ENCODE measurements at regions of chrX and their contacts with region 1.

Region 1: DNA sequence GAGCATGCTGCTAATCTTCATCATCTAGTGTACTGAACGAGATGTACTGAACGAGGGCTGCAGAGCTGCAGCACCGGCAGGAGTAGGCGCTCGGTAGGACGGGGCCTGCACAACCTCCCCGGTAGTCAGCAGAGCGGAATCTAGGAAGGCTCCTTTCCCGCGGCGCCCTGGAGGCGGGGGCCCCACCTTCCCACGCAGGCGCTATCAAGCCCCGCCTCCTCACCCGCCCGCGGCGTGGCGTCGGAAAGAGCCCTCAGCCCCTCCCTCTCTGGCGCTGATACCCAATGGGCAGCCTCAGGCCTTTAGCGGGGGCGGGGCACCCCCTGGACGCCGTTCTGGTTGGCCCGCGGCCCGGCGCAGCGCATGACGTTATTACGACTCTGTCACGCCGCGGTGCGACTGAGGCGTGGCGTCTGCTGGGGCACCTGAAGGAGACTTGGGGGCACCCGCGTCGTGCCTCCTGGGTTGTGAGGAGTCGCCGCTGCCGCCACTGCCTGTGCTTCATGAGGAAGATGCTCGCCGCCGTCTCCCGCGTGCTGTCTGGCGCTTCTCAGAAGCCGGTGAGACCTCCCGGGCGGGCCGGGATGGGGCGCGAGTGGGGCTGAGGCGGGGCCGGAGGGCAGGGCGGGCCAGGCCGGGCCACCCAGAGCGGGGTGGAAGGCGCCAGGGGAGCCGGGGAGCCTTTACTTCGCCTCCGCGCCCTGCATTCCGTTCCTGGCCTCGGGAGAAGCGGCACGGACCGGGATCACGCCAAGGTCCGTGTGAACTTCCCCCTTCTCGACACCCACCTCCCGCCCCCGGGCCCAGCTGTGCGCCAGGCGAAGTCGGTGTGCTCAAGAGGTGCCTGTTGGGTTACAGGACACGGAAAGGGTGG is at the start of gene PDHA1:
- DNase-seq: peak; percentile 85 to 93
- ATAC-seq: peak; percentile 88 to 92
- H3K4me3 ChIP-seq: peak within 1 kb of the TSS; percentile 57 to 79 (median 60)
- H3K27ac ChIP-seq: peak within 1 kb of the TSS; percentile 84 to 94 (median 93)
- H3K4me1 ChIP-seq: peaks cover 10 to 14% of the 10 kb centered on the region in 2 donors
- H3K27me3 ChIP-seq: no peaks in the 10 kb centered on the region
- CTCF ChIP-seq: no peak
- POLR2A ChIP-seq: peak; percentile 82 to 91
- total RNA-seq, gene PDHA1: 143 to 238 (median 203) TPM

Region 2: GRCh38 chrX:17736856-17737706 is 1606.7 kb before region 1 on chrX and contains the start of gene SCML1:
- in situ Hi-C with region 1: no loop called
- intact Hi-C with region 1: loop called (anchors 10 kb)
- DNase-seq: peak; percentile 96 to 98
- ATAC-seq: peak; percentile 85 to 86
- H3K4me3 ChIP-seq: peak within 1 kb of the TSS; percentile 65 to 77 (median 76)
- H3K27ac ChIP-seq: peak within 1 kb of the TSS; percentile 88 to 98 (median 96)
- H3K4me1 ChIP-seq: peaks cover 7 to 25% of the 10 kb centered on the region in 2 donors
- H3K27me3 ChIP-seq: no peaks in the 10 kb centered on the region
- CTCF ChIP-seq: no peak
- POLR2A ChIP-seq: peak; percentile 79 to 80
- total RNA-seq, gene SCML1: 5.6 to 29.0 (median 5.8) TPM

Region 3: GRCh38 chrX:18390941-18391538 is 952.7 kb before region 1 on chrX:
- in situ Hi-C with region 1: loop called (anchors 10 to 25 kb)
- intact Hi-C with region 1: no loop called
- DNase-seq: peak; percentile 11 to 34
- ATAC-seq: peak; percentile 36 to 45
- H3K4me3 ChIP-seq: no peak overlapping the region
- H3K27ac ChIP-seq: no peak overlapping the region
- H3K4me1 ChIP-seq: no peaks in the 10 kb centered on the region
- H3K27me3 ChIP-seq: no peaks in the 10 kb centered on the region
- CTCF ChIP-seq: peak; percentile 43 to 83 (median 70)
- POLR2A ChIP-seq: no peak

Region 4: GRCh38 chrX:18674788-18675735 is 668.7 kb before region 1 on chrX:
- in situ Hi-C with region 1: no loop called
- intact Hi-C with region 1: loop called (anchors 10 kb)
- DNase-seq: peak; percentile 35 to 58
- ATAC-seq: peak; percentile 89 to 91
- H3K4me3 ChIP-seq: peak overlapping the region; percentile 66 to 79 (median 70)
- H3K27ac ChIP-seq: peak overlapping the region; percentile 82 to 89 (median 85)
- H3K4me1 ChIP-seq: peaks cover 0 to 4% of the 10 kb centered on the region in 2 donors
- H3K27me3 ChIP-seq: no peaks in the 10 kb centered on the region
- CTCF ChIP-seq: no peak
- POLR2A ChIP-seq: peak; percentile 24 to 38

Region 5: DNA sequence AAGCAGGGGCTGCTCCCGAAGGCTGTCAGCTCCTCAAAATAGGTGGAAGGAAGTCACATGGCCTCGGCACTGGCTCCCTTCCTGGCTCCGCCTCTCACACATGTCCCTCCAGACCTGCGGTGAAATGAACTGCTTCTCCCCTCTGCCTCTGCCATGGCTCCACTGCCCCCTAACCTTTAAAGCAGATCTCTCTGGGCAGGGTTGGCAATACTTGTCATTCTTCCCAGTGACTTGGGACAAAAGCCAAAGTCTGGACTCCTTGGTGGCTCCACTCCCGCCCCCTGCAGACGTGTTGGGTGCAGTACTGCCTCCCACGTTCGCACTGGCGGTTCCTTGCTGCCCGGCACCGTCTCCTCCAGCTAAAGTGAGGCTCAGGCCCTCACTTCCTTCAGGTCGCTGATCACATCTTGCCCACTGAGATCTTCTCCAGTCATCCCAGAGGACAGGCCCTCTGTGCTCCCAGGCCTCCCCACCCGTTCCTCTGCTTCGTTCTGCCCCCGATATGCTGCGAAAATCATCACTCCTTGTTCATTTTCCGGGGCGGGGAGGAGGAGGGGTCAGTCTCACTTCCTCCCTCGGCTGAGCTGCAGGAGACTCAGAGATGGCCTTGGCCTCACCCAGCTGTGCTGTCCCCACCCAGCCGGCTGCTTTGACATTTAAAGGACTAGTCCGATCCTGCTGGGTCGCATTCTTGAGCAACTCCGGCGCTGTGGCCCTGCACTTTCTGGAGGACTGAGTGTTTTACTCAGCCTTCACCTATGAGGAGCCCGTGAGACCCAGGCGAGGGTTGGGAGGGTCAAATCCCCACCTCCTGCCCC is 457.2 kb before region 1 on chrX:
- in situ Hi-C with region 1: loop called in 1 of 4 experiments (anchors 25 kb)
- intact Hi-C with region 1: loop called (anchors 2 kb)
- DNase-seq: peak; percentile 56 to 85
- ATAC-seq: peak; percentile 71 to 78
- H3K4me3 ChIP-seq: peak overlapping the region; percentile 45 to 49 (median 48)
- H3K27ac ChIP-seq: peak overlapping the region; percentile 84 to 90 (median 86)
- H3K4me1 ChIP-seq: peaks cover 12 to 20% of the 10 kb centered on the region in 2 donors
- H3K27me3 ChIP-seq: no peaks in the 10 kb centered on the region
- CTCF ChIP-seq: peak; percentile 51 to 66 (median 65)
- POLR2A ChIP-seq: peak; percentile 33 to 40

Region 6: DNA sequence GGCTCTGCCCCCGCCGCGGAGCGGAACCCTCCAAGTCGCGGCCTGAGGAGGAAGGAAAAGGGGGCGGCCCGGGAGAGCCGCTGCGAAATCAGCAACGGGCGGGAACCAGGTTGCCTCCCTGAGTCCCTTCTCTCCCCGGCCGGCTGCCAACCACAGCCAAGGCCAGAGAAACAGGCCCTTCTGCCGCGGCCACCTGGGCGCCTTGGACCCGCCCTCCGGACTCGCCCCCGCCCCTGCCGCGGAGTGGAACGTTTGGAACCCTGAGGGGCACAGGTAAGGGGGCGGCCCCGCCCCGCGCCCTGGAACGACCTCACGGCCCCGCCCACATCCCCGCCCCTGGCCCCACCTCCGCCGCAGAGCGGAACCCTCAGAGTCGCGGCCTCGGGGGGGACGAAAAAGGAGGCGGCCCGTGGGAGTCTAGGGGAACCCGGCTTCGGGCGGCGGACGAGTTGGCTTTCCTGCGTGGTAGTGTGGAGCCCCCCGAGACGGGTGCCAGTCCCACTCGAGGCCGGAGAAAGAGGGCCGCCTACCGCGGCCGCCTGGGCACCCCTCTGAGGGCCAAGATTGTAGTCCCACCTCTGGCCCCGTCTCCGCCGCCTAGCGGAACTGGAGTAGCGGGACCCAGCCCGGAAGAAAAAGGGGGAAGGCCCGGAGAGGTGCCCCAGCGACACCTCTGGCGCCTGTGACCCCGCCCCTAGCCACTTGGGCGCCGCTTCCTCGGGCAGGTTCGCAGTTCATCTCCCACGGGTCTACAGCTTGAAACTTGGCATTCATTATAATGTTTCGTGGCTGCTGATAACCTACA is 359.2 kb before region 1 on chrX:
- in situ Hi-C with region 1: loop called in 2 of 4 experiments (anchors 25 kb)
- intact Hi-C with region 1: loop called (anchors 10 kb)
- DNase-seq: peak; percentile 55 to 77
- ATAC-seq: peak; percentile 90 to 91
- H3K4me3 ChIP-seq: peak overlapping the region; percentile 73 to 86 (median 76)
- H3K27ac ChIP-seq: peak overlapping the region; percentile 88 to 96 (median 92)
- H3K4me1 ChIP-seq: peaks cover 5 to 10% of the 10 kb centered on the region in 2 donors
- H3K27me3 ChIP-seq: no peaks in the 10 kb centered on the region
- CTCF ChIP-seq: peak; percentile 67 to 72 (median 68)
- POLR2A ChIP-seq: peak; percentile 62 to 81